ENCODE measurements at regions of chr10 and their contacts with region 1.

Region 1: DNA sequence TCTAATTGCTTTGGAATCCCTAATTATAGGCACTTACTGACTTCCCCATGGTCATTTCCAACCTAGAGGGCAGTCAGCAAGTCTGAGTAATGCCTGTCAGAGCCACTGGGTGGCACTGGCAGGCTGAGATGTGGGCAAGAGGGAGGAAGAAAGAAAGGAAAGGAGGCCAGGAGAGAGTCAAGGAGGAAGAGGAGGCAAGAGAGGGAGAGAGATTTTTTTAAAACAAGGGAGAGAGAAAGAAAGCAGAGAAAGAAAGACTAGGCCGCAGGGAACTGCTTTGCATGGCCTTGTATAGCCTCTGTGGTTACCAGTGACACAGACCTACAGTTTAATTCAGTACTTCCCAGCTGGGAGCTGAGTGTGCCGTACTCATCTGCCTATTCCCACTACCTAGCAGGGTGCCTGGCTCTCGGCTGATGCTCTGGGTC is 210.4 kb upstream of the ADO start:
- DNase-seq: peak; percentile 56
- ATAC-seq: peak; percentile 96
- H3K4me3 ChIP-seq: no peak overlapping the region
- H3K27ac ChIP-seq: no peak overlapping the region
- H3K4me1 ChIP-seq: no peaks in the 10 kb centered on the region
- H3K27me3 ChIP-seq: no peaks in the 10 kb centered on the region
- CTCF ChIP-seq: peak; percentile 93
- POLR2A ChIP-seq: no peak
- RAD21 ChIP-seq: peak; percentile 93

Region 2: DNA sequence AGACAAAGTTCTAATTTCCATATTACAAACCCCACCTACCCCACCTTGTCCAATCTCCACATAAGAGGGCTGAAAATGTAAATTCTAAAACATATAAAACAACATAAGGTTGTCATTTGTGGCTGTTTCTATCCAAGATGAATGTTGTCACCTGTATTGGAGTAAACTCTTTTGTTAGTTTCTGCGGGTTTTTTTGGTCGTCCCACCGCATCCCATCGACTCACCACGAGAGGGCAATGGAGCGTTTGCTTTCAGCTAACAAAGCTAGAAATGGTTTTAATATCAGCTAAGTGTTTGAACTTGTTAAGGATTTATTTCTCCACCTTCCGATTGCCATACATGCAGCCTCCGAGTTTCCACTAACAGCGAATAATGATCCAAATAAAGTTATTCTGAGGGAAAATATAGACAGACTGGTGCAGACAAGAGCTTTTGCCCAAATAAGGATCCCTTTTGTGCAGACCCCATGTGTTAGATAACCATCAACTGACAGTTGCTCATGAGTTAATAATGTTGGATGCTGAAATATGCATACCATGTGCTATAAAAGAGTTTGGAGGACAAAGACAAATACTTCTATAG is 555.4 kb before region 1 on chr10:
- CTCF ChIA-PET with region 1: no interaction called
- POLR2A ChIA-PET with region 1: no interaction called
- dilution Hi-C with region 1: no loop called
- in situ Hi-C with region 1: loop called (anchors 25 kb)
- intact Hi-C with region 1: no loop called
- DNase-seq: peak; percentile 78
- ATAC-seq: peak; percentile 33
- H3K4me3 ChIP-seq: no peak overlapping the region; the same call in 1 of the 2 replicates
- H3K27ac ChIP-seq: peak overlapping the region; percentile 96
- H3K4me1 ChIP-seq: peaks cover 28% of the 10 kb centered on the region
- H3K27me3 ChIP-seq: no peaks in the 10 kb centered on the region
- CTCF ChIP-seq: peak; percentile 84
- POLR2A ChIP-seq: 0 out of 2 replicates have a peak, but pooled peaks have one; percentile 23
- RAD21 ChIP-seq: peak; percentile 90

Region 3: GRCh38 chr10:62492012-62492869 is 101.9 kb before region 1 on chr10:
- CTCF ChIA-PET with region 1: no interaction called
- POLR2A ChIA-PET with region 1: no interaction called
- dilution Hi-C with region 1: no loop called
- in situ Hi-C with region 1: no loop called
- intact Hi-C with region 1: loop called (anchors 5 kb)
- DNase-seq: peak; percentile 25
- ATAC-seq: no peak
- H3K4me3 ChIP-seq: no peak overlapping the region
- H3K27ac ChIP-seq: no peak overlapping the region
- H3K4me1 ChIP-seq: no peaks in the 10 kb centered on the region
- H3K27me3 ChIP-seq: peaks cover 10% of the 10 kb centered on the region
- CTCF ChIP-seq: peak; percentile 51
- POLR2A ChIP-seq: no peak
- RAD21 ChIP-seq: peak; percentile 55

Region 4: DNA sequence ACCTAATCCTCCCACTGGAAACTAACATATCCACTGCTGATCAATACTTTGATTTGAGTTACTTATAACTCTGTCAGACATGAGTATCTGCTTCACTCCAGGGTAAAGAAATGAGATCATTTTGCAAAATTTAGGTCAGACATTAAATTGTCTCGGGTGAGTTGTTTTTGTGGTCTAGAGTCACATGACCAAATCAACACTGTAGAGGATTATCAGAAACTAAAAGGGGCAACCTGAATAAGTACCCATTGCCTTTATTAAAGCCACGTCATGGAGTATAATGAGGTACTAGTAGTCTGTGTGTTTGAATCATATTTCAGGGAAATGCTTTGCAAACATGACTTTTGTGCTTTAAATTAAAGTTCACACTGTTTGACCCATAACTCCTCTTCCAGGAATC is 102.7 kb after region 1 on chr10:
- CTCF ChIA-PET with region 1: no interaction called
- POLR2A ChIA-PET with region 1: no interaction called
- dilution Hi-C with region 1: no loop called
- in situ Hi-C with region 1: no loop called
- intact Hi-C with region 1: no loop called
- DNase-seq: no peak
- ATAC-seq: no peak
- H3K4me3 ChIP-seq: no peak overlapping the region
- H3K27ac ChIP-seq: no peak overlapping the region
- H3K4me1 ChIP-seq: no peaks in the 10 kb centered on the region
- H3K27me3 ChIP-seq: peaks cover 7% of the 10 kb centered on the region
- CTCF ChIP-seq: no peak
- POLR2A ChIP-seq: no peak
- RAD21 ChIP-seq: no peak

Region 5: DNA sequence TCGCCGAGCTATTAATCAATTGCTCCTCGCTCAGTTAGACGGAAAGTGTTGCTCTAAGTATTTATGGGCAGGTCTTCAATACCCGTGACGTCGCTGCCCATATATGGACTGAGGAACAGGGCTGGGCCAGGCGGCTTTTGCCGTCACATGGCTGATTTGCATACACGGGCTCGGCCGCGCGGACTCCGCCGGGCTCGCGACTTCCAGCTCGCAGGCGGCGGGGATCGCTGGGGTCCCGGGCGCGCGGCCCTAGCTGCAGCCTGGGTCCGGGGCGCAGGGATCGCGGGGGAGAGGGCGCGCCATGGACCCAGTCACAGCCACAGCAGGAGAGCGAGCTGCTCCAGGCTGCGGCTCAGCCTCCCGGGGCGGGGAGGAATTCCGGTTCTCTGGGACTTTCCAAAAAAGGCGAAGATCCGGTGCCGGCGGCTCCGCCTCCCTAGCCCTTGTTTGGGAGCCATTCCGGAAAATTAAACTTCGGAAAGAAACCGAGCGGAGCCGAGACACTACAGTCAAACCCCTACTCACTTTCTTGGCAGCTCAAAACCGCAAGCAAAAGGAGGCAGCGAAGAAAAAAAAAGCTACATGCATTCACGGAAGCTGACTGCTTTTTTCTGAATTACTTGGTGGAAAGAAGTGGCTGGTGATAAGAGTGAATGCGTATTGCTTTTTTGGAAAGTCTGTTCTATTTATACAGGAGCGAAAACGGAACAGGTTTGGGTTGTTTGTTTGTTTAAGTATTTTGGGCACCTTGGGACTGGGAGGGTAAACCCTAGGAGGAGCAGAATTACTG is 222.4 kb after region 1 on chr10 and contains the start of gene EGR2:
- CTCF ChIA-PET with region 1: no interaction called
- POLR2A ChIA-PET with region 1: no interaction called
- dilution Hi-C with region 1: no loop called
- in situ Hi-C with region 1: no loop called
- intact Hi-C with region 1: loop called (anchors 1 kb)
- DNase-seq: peak; percentile 94
- ATAC-seq: peak; percentile 91
- H3K4me3 ChIP-seq: peak within 1 kb of the TSS; percentile 73
- H3K27ac ChIP-seq: peak within 1 kb of the TSS; percentile 53
- H3K4me1 ChIP-seq: peaks cover 7% of the 10 kb centered on the region; the same call in 1 of the 2 replicates
- H3K27me3 ChIP-seq: peaks cover 48% of the 10 kb centered on the region
- CTCF ChIP-seq: no peak
- POLR2A ChIP-seq: peak; percentile 50
- RAD21 ChIP-seq: no peak
- total RNA-seq, gene EGR2: 0.36 and 0.56 TPM in 2 replicates

Region 6: DNA sequence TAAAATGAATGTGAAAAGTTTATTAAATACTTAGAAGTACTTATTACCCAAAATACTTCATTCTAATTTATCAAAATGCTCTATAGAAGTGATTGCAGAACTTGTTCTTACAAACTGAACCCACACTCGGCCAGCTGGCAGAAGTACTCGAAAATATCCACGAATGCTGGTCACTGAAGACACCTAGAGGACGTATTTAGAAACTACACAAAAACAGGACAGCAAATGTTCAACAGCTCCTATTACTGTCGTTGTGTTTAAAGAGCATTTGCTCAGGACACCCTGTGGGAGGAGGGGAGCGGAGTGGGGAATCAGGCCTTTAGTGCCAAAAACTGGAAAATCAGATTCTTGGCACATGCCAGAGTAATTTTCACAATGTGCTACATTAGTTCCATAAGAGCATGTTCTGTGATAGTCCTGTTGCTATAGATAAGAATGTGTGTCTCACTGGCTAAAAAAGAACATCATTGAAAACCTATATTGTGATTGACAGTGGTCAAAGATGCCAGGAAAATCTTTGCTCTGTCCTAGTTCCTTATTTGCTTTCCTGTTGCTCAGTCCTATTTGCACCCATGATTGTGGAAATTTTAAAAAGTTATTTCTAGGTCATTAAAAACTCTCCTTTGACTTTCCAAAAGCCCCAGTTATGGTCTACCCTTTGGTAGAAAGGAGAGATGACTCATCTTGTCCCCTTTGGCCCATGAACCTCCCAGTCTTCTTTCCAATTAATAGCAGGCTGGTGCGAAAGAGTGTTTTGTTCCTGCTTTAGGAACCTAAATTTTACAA is 490.0 kb after region 1 on chr10:
- CTCF ChIA-PET with region 1: interaction called, 4 read pairs
- POLR2A ChIA-PET with region 1: no interaction called
- dilution Hi-C with region 1: no loop called
- in situ Hi-C with region 1: no loop called
- intact Hi-C with region 1: loop called (anchors 1 kb)
- DNase-seq: peak; percentile 77
- ATAC-seq: peak; percentile 95
- H3K4me3 ChIP-seq: no peak overlapping the region
- H3K27ac ChIP-seq: no peak overlapping the region
- H3K4me1 ChIP-seq: no peaks in the 10 kb centered on the region; the same call in 1 of the 2 replicates
- H3K27me3 ChIP-seq: no peaks in the 10 kb centered on the region; the same call in 1 of the 2 replicates
- CTCF ChIP-seq: peak; percentile 74
- POLR2A ChIP-seq: no peak
- RAD21 ChIP-seq: peak; percentile 81